Activated naive CD4-positive, alpha-beta T cell treated with anti-CD3 and anti-CD28 coated beads for 36 hours (primary cell): ENCODE measurements at regions of chr3 and their contacts with region 1.

Region 1: GRCh38 chr3:10437272-10437994 is 68.0 kb downstream of the ATP2B2 start:
- DNase-seq: peak; percentile 84
- H3K4me3 Mint-ChIP-seq: no peak overlapping the region
- H3K27ac Mint-ChIP-seq: peak overlapping the region; percentile 48
- H3K4me1 Mint-ChIP-seq: peaks cover 26% of the 10 kb centered on the region
- H3K27me3 Mint-ChIP-seq: no peaks in the 10 kb centered on the region

Region 2: GRCh38 chr3:10602769-10603768 is 165.6 kb after region 1 on chr3:
- CTCF ChIA-PET with region 1: no interaction called
- intact Hi-C with region 1: loop called (anchors 2 kb)
- DNase-seq: peak; percentile 81
- H3K4me3 Mint-ChIP-seq: no peak overlapping the region
- H3K27ac Mint-ChIP-seq: no peak overlapping the region
- H3K4me1 Mint-ChIP-seq: peaks cover 35% of the 10 kb centered on the region
- H3K27me3 Mint-ChIP-seq: peaks cover 15% of the 10 kb centered on the region

Region 3: DNA sequence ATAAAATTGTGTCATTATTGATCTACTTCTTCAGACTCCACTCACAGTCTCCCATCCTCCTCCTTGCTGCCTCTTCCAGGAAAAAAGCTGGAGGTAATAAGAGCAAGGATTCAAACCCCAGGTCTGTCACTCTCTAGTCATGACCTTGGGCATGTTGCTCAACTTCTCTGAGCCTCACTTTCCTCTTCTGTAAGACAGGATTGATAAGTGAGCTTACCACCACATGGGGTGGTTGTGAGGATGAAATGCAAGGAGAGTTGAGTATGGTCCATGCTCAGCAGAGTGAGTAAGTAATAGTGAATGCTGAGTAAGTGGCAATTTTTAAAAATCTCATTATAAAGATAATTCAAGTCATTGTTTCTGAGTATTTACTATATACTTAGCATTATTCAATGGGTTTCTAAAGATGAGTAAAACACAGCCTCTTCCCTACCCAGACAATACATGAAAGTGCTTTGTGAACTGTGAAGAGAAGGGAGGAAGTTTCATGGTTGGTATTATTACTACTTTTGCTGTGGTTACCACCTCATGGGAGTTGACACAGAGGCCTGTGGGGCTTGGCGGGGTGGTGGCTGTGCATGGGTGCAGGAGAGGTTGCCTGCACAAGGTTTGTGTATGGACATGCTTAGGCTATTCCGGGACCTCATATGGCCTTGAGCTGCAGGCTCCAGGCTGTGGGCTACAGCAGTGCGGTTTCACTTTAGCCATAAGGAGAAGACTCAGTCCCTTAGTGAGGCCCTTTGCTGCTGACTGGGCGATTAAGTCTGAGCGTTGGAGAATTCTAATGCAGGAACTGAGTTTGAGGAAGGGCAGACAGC is 408.6 kb after region 1 on chr3:
- CTCF ChIA-PET with region 1: no interaction called
- intact Hi-C with region 1: loop called (anchors 10 kb)
- DNase-seq: peak; percentile 25
- H3K4me3 Mint-ChIP-seq: no peak overlapping the region
- H3K27ac Mint-ChIP-seq: no peak overlapping the region
- H3K4me1 Mint-ChIP-seq: peaks cover 8% of the 10 kb centered on the region
- H3K27me3 Mint-ChIP-seq: peaks cover 43% of the 10 kb centered on the region

Region 4: DNA sequence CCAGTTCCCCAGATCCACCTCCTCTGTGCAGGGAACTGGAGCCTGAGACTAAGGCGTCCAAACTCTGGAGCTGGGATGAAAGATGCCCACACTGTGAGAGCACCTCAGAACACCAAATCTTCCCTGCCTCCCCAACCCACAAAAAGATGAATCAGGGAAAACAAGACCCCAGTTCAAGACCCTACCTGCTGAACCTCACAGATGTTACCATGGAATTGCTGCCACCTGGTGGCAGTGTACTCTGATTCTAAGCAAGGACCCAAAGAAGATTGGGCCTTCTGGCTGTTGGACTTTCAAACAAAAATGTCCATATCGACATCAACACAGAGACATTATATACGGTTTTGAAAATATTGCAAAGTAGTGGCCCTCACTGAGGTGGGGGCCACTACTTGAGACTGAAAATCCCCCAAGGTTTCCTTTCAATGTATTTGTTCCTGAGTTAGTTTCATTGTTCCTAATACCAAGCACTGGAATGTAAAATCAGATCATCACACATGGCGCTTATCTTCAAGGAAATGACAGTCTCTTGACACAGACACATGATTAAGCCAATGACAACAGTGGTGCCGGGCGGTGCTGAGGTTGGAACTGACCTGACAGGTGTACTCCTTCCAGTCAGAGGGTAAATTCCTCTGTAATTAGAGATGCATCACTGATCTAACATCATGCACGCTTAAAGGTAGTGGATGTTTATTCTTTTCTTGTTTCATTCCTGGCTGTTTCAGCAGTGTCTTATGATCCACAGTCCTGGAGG is 446.2 kb after region 1 on chr3:
- CTCF ChIA-PET with region 1: no interaction called
- intact Hi-C with region 1: no loop called
- DNase-seq: peak; percentile 26
- H3K4me3 Mint-ChIP-seq: no peak overlapping the region
- H3K27ac Mint-ChIP-seq: no peak overlapping the region
- H3K4me1 Mint-ChIP-seq: no peaks in the 10 kb centered on the region
- H3K27me3 Mint-ChIP-seq: peaks cover 12% of the 10 kb centered on the region